Natural killer cell (primary cell): ENCODE measurements at regions of chr5 and their contacts with region 1.

Region 1: DNA sequence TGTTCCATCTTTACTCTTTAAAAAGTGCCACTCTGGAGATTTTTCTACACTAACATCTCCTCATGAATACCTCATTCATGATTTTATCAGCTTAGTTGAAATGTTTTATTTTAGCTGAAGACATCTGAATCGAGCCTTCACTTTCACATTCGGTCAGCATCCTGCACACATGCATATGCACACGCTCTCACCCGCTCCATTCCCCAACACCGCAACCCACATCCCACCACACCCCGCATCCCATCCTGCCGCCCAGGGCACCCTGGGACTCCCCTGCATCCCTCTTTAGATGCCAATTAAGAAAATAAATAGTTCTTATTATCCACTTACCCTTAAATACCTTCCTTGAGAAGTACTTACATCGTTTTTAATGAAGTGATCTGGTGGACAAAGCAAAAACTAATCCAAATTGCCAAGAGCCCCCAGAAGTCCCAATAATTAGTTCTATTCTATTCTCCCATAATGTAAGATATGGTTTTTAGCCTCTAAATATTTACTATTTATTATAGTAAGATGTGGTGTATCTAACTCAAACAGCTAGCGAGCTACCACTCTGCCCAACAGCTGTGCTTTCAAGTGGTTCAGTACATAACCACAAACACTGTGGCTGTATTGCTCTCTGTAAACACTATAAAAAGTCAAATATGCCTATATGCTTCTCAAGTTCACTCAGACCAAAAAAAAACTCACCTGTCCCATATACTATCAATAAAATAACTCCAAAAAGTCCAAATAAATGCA is 38.2 kb downstream of the GZMK start:
- DNase-seq: peak; percentile 63 to 69
- ATAC-seq: peak; percentile 77 to 87 (median 85)
- H3K4me3 ChIP-seq: peak overlapping the region; percentile 38
- H3K4me3 Mint-ChIP-seq: peak overlapping the region; percentile 90
- H3K27ac ChIP-seq: peak overlapping the region; percentile 83
- H3K27ac Mint-ChIP-seq: peak overlapping the region; percentile 95 to 96
- H3K4me1 ChIP-seq: peaks cover 26% of the 10 kb centered on the region
- H3K4me1 Mint-ChIP-seq: peaks cover 72 to 86% of the 10 kb centered on the region in 2 donors
- H3K27me3 ChIP-seq: no peaks in the 10 kb centered on the region
- H3K27me3 Mint-ChIP-seq: no peaks in the 10 kb centered on the region
- CTCF ChIP-seq: no peak

Region 2: DNA sequence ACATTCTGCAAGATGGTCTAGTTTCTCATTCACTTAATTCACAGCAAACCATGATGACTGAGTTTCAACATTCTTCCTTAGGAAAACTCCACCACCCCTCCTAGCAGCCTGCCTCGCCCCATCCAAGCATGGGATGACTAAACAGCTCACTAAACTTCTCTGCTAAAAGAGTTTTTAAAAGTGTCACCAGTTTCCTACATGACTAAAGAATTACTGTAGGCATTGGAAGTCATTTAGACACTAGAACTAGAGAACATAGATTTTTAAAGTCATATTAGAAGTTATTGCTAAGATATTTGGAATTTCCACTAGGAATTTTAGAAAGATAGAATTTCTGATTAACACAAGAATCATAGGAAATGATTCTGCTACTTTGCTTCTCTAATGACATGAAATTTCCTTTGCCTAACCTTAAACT is 71.4 kb before region 1 on chr5:
- intact Hi-C with region 1: loop called (anchors 2 kb)
- DNase-seq: no peak
- ATAC-seq: no peak
- H3K4me3 ChIP-seq: no peak overlapping the region
- H3K4me3 Mint-ChIP-seq: no peak overlapping the region
- H3K27ac ChIP-seq: no peak overlapping the region
- H3K27ac Mint-ChIP-seq: peak overlapping the region in 1 of 2 donors; percentile 9
- H3K4me1 ChIP-seq: peaks cover 37% of the 10 kb centered on the region
- H3K4me1 Mint-ChIP-seq: peaks cover 76 to 78% of the 10 kb centered on the region in 2 donors
- H3K27me3 ChIP-seq: no peaks in the 10 kb centered on the region
- H3K27me3 Mint-ChIP-seq: no peaks in the 10 kb centered on the region
- CTCF ChIP-seq: no peak

Region 3: DNA sequence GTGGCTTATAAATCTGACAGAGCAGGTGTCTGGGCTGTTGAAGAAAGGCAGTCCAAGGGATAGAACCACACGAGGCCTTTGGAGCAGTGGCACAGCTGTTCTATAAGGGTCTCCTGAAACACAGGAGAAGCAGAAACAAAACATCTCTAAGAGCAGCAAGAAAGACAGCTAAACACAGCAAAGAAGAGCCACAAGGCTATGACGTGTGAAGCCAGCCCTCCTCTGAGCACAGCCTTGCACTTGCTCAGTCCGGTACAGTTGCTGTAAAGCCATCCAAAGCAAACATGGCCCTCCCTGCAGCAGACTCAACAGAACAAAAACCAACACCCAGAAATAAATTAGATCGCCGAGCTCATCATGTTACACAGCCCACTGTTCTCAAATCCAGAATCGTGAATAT is 40.8 kb before region 1 on chr5:
- intact Hi-C with region 1: loop called (anchors 5 kb)
- DNase-seq: peak in 1 of 2 donors; percentile 49
- ATAC-seq: peak; percentile 19 to 46 (median 38)
- H3K4me3 ChIP-seq: no peak overlapping the region
- H3K4me3 Mint-ChIP-seq: peak overlapping the region; percentile 53
- H3K27ac ChIP-seq: no peak overlapping the region
- H3K27ac Mint-ChIP-seq: peak overlapping the region; percentile 77 to 83
- H3K4me1 ChIP-seq: peaks cover 22% of the 10 kb centered on the region
- H3K4me1 Mint-ChIP-seq: peaks cover 53 to 54% of the 10 kb centered on the region in 2 donors
- H3K27me3 ChIP-seq: no peaks in the 10 kb centered on the region
- H3K27me3 Mint-ChIP-seq: no peaks in the 10 kb centered on the region
- CTCF ChIP-seq: no peak

Region 4: DNA sequence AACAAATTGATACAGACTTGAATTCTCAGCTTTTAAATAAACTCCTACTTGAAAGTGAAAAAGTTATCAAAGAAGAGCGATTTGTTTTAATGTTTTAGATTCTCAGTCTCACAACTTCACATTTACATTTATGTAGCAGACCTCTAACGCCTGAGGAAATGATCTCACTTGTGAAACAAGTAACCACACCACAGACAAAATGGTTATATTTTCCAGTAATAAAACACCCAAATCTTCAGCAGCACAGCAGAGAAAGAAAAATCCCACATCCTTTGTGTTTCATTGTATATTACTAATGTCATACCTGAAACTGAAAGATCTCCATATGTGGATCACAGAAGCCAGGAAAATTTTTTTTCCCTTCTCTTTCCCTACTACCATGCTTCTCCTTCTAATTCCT is 10.5 kb after region 1 on chr5:
- intact Hi-C with region 1: loop called (anchors 1 kb)
- DNase-seq: peak in 1 of 2 donors; percentile 65
- ATAC-seq: peak; percentile 81 to 92 (median 90)
- H3K4me3 ChIP-seq: no peak overlapping the region
- H3K4me3 Mint-ChIP-seq: peak overlapping the region; percentile 83
- H3K27ac ChIP-seq: peak overlapping the region; percentile 72
- H3K27ac Mint-ChIP-seq: peak overlapping the region; percentile 79 to 98
- H3K4me1 ChIP-seq: peaks cover 31% of the 10 kb centered on the region
- H3K4me1 Mint-ChIP-seq: peaks cover 47 to 48% of the 10 kb centered on the region in 2 donors
- H3K27me3 ChIP-seq: no peaks in the 10 kb centered on the region
- H3K27me3 Mint-ChIP-seq: no peaks in the 10 kb centered on the region
- CTCF ChIP-seq: no peak